Stomach (tissue), 19 donors: ENCODE measurements at regions of chr20 and their contacts with region 1.

Region 1: GRCh38 chr20:34693414-34693813 is 10.7 kb upstream of the TP53INP2 start:
- DNase-seq: peak in 1 of 2 donors; percentile 44
- H3K4me3 ChIP-seq: no peak overlapping the region
- H3K27ac ChIP-seq: no peak overlapping the region
- H3K4me1 ChIP-seq: no peaks in the 10 kb centered on the region
- H3K27me3 ChIP-seq: no peaks in the 10 kb centered on the region
- CTCF ChIP-seq: no peak
- EP300 ChIP-seq: no peak
- POLR2A ChIP-seq: no peak

Region 2: DNA sequence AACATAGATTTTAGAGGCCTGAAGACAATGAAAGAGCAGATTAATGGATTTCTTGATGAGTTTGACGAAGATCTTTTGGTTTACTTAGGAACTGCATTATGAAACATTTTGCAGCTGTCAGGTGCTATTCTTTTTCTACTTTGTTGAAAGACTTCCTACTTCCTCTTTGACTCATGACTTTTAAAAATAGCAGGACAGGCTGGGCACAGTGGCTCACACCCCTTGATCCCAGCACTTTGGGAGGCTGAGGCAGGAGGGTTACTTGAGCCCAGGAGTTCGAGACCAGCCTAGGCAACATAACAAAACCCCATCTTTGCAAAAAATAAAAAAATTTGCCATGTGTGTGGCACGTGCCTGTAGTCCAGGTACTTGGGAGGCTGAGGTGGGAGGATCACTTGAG is 278.3 kb before region 1 on chr20:
- intact Hi-C with region 1: no loop called
- DNase-seq: peak in 1 of 2 donors; percentile 7
- H3K4me3 ChIP-seq: no peak overlapping the region
- H3K27ac ChIP-seq: peak overlapping the region in 3 of 5 donors; percentile 24 to 60 (median 54)
- H3K4me1 ChIP-seq: peaks cover 0 to 28% (median 8%) of the 10 kb centered on the region in 4 donors
- H3K27me3 ChIP-seq: no peaks in the 10 kb centered on the region
- CTCF ChIP-seq: no peak
- EP300 ChIP-seq: no peak
- POLR2A ChIP-seq: no peak

Region 3: DNA sequence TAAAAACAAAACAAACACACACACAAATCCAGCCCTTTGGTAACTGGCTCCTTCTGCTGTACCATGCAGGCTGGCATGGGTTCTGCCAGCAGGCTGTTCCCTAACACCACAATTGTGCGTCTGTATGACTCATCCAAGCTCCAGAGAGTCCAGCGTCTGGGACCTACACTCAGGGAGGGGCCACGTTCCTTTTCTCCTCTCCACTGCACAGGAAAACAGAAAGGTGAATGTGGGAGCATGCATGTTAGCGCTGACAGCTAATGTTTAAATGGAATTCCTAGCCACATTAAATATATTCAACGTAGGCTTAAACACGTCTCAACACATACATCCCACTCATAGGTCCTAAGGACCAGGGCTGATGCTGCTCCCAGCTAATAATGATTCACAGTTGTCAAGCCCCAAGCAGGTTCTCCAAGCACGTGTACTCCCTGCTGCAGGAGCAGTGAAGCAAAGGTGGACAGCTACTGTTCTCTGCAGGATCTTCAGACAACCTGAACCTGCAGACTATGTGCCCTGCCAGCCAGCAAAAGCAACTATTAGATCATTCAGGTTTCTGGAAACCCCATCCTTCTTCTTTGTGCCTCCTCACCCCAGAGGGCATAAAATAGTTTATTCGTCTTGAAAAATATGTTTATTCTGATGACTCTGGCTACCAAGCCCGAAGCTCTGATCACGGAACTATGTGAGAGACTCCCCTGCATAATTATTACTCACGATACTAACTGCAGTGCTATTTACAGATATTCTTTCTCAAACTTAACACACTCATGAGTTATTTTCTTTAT is 114.0 kb before region 1 on chr20:
- intact Hi-C with region 1: loop called (anchors 10 kb)
- DNase-seq: peak; percentile 70 to 73
- H3K4me3 ChIP-seq: no peak overlapping the region
- H3K27ac ChIP-seq: no peak overlapping the region
- H3K4me1 ChIP-seq: peaks cover 0 to 38% (median 19%) of the 10 kb centered on the region in 4 donors
- H3K27me3 ChIP-seq: no peaks in the 10 kb centered on the region
- CTCF ChIP-seq: peak in 5 of 7 experiments; percentile 8 to 55 (median 41)
- EP300 ChIP-seq: no peak
- POLR2A ChIP-seq: no peak